HCT116 (cell line): ENCODE measurements at regions of chr15 and their contacts with region 1.

Region 1: DNA sequence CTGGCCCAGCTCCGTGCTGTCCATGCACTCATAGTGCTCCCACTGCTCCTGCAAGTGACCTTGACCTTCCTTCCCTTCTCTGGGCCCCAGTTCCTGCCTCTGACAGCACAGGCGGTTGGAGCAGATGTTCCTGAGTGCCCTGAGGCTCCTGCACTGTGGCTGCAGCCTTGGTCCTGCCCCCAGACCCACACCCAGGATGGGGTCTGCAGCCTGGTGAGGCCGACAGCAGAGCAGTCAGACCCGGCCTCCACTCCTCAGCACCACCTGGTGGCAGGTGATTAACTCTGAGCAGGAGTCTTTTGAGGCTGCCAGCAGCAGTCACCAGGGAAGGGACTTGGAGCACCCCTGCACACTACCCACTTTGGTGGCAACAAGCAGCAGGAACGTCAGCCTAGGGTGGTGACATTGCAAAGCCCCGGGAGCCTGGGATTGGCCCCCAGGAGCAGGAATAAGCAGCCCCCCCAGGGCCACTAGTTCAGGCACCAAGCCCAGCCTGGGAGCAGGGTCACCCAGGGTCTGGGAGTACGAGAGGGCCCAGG is 64.6 kb downstream of the CYP11A1 start:
- DNase-seq: no peak
- ATAC-seq: peak; percentile 80
- H3K4me3 ChIP-seq: no peak overlapping the region
- H3K27ac ChIP-seq: no peak overlapping the region
- H3K4me1 ChIP-seq: peaks cover 0 to 8% of the 10 kb centered on the region in 2 experiments; a peak in 2 of 4 replicates
- H3K27me3 ChIP-seq: peaks cover 34% of the 10 kb centered on the region; the same call in 1 of the 2 replicates
- CTCF ChIP-seq: peak; percentile 75 to 90 (median 81)
- POLR2A ChIP-seq: no peak
- RAD21 ChIP-seq: peak; percentile 87

Region 2: GRCh38 chr15:74053941-74054529 is 248.9 kb before region 1 on chr15:
- CTCF ChIA-PET with region 1: interaction called, 45 read pairs
- POLR2A ChIA-PET with region 1: no interaction called
- RAD21 ChIA-PET with region 1: interaction called, 7 to 9 read pairs
- intact Hi-C with region 1: loop called (anchors 5 kb)
- DNase-seq: peak; percentile 52
- ATAC-seq: peak; percentile 99
- H3K4me3 ChIP-seq: peak overlapping the region in 1 of 2 experiments; percentile 29; a peak in 1 of 4 replicates
- H3K27ac ChIP-seq: no peak overlapping the region
- H3K4me1 ChIP-seq: peaks cover 4 to 16% of the 10 kb centered on the region in 2 experiments; a peak in 3 of 4 replicates
- H3K27me3 ChIP-seq: no peaks in the 10 kb centered on the region
- CTCF ChIP-seq: peak; percentile 33 to 62 (median 53); a peak in 5 of 6 replicates
- POLR2A ChIP-seq: no peak
- RAD21 ChIP-seq: peak; percentile 68

Region 3: GRCh38 chr15:74127260-74127953 is 175.5 kb before region 1 on chr15:
- CTCF ChIA-PET with region 1: interaction called, 21 read pairs
- POLR2A ChIA-PET with region 1: interaction called, 4 read pairs
- RAD21 ChIA-PET with region 1: interaction called, 3 to 4 read pairs
- intact Hi-C with region 1: loop called (anchors 1 kb)
- DNase-seq: peak; percentile 69
- ATAC-seq: peak; percentile 100
- H3K4me3 ChIP-seq: peak overlapping the region; percentile 32 to 33
- H3K27ac ChIP-seq: no peak overlapping the region
- H3K4me1 ChIP-seq: peaks cover 0 to 9% of the 10 kb centered on the region in 2 experiments; a peak in 2 of 4 replicates
- H3K27me3 ChIP-seq: no peaks in the 10 kb centered on the region
- CTCF ChIP-seq: peak; percentile 83 to 99 (median 98)
- POLR2A ChIP-seq: no peak
- RAD21 ChIP-seq: peak; percentile 100